ENCODE measurements at regions of chr10 and their contacts with region 1.

Region 1: GRCh38 chr10:128326251-128326650 is 200.0 kb upstream of the MKI67 start:
- DNase-seq: no peak

Region 2: DNA sequence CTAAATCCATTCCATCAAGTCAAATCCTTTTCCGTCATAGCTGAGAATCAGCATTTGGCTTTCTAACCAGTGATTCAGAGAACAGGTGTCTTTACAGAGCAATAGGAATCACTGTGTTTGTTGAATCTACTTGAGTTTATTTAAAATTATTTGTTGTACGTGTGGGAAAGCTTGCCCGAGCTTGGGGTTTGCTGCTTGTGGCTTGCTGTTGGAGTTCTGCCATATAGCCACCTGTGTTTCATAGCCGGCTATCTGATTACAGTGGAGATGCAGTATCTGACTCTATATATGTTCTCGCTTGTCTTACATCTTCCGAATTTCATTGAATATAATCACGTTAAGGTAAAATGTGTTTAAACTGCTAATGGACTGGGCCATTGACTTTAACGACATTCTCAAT is 74.3 kb after region 1 on chr10:
- intact Hi-C with region 1: loop called in 1 of 2 experiments (anchors 2 kb)
- DNase-seq: no peak

Region 3: GRCh38 chr10:128675405-128675804 is 349.2 kb after region 1 on chr10:
- intact Hi-C with region 1: no loop called
- DNase-seq: no peak

Measured in posterior vena cava (tissue), 2 donors.